Activated CD4-positive, alpha-beta T cell treated with anti-CD3 and anti-CD28 coated beads, Interleukin-2, amount 10 ng/mL, durations not matched to agents 24 days and 14 days (primary cell): ENCODE measurements at regions of chr5 and their contacts with region 1.

Region 1: GRCh38 chr5:86880785-86881492 is 263.2 kb downstream of the COX7C start:
- DNase-seq: peak; percentile 81
- H3K4me3 Mint-ChIP-seq: no peak overlapping the region
- H3K27ac Mint-ChIP-seq: no peak overlapping the region
- H3K4me1 Mint-ChIP-seq: no peaks in the 10 kb centered on the region
- H3K27me3 Mint-ChIP-seq: peaks cover 10% of the 10 kb centered on the region

Region 2: GRCh38 chr5:86797677-86798076 is 83.3 kb before region 1 on chr5:
- intact Hi-C with region 1: no loop called
- DNase-seq: no peak
- H3K4me3 Mint-ChIP-seq: no peak overlapping the region
- H3K27ac Mint-ChIP-seq: no peak overlapping the region
- H3K4me1 Mint-ChIP-seq: no peaks in the 10 kb centered on the region
- H3K27me3 Mint-ChIP-seq: peaks cover 3% of the 10 kb centered on the region

Region 3: GRCh38 chr5:86951761-86952160 is 70.8 kb after region 1 on chr5:
- intact Hi-C with region 1: no loop called
- DNase-seq: no peak
- H3K4me3 Mint-ChIP-seq: no peak overlapping the region
- H3K27ac Mint-ChIP-seq: no peak overlapping the region
- H3K4me1 Mint-ChIP-seq: no peaks in the 10 kb centered on the region
- H3K27me3 Mint-ChIP-seq: peaks cover 23% of the 10 kb centered on the region

Region 4: DNA sequence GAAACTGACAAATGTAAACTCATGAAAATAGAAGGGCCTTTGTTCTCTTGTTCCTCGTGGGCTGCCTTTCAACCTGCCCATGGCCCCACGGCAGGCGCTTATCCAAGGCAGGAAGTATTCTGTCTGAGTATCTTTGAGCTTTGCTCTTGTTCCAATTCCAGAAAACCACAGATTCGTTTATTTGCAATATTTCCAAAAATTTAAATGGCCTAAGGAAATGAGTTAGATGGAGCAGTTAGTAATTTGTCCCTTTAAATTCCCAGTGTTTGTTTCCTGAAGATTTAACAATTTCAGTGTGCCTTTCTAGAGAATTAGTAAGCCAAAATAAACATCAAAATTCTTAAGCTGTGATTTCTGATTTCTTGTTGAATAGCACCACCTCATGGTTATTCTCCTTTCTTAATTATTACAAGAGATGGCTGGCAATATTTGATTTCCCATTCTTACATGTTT is 87.4 kb after region 1 on chr5:
- intact Hi-C with region 1: loop called (anchors 1 kb)
- DNase-seq: no peak
- H3K4me3 Mint-ChIP-seq: no peak overlapping the region
- H3K27ac Mint-ChIP-seq: no peak overlapping the region
- H3K4me1 Mint-ChIP-seq: peaks cover 4% of the 10 kb centered on the region
- H3K27me3 Mint-ChIP-seq: peaks cover 28% of the 10 kb centered on the region

Region 5: DNA sequence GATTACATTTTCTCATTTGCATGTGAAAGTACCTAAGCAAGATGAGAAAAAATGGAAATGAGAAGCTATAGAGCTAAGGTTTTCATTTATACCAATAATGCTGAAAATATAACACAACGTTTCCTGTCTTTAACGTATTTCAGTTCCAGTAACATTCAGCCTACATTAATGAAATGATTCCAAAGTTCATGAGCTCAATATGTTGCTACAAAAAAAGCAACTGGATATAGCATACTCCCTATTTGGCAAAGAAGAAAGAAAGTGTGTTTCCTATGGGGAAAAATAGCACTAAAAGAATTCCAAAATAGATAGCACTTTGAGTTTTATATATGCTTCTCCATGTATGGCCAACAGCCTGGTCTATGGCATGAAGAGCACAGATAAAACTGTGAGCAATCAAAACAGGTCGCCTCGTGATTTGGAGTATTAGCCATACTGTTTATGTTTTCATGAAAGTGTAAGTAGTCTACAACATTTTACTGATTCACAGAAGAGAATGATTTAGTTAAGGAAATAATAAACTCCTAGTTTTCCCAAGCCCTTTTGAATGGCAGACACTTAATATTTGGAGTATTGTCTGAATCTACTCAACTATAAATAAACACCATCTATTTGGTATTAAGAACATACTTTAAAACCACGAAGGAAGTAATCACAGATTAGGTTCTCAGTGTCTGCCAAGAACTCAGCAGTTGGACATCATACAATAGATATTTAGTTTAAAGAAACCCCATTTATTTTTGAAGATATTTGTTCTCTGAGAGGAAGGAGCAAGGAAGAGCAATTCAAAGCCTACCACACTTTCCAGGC is 128.0 kb after region 1 on chr5:
- intact Hi-C with region 1: loop called (anchors 1 kb)
- DNase-seq: no peak
- H3K4me3 Mint-ChIP-seq: no peak overlapping the region
- H3K27ac Mint-ChIP-seq: no peak overlapping the region
- H3K4me1 Mint-ChIP-seq: no peaks in the 10 kb centered on the region
- H3K27me3 Mint-ChIP-seq: peaks cover 13% of the 10 kb centered on the region

Region 6: GRCh38 chr5:87400305-87400899 is 519.5 kb after region 1 on chr5:
- intact Hi-C with region 1: loop called (anchors 5 kb)
- DNase-seq: no peak
- H3K4me3 Mint-ChIP-seq: no peak overlapping the region
- H3K27ac Mint-ChIP-seq: no peak overlapping the region
- H3K4me1 Mint-ChIP-seq: peaks cover 13% of the 10 kb centered on the region
- H3K27me3 Mint-ChIP-seq: no peaks in the 10 kb centered on the region